Activated T-helper 1 cell treated with anti-CD3 and anti-CD28 coated beads, Interleukin-12 subunit alpha, Interleukin-12 subunit beta, Interleukin-2, Interleukin-4 antibody, amounts not matched to agents 30 ng/mL and 10 ng/mL and 1 ng/mL, durations not matched to agents 14 hours and 24 hours and 36 hours (primary cell): ENCODE measurements at regions of chr1 and their contacts with region 1.

Region 1: DNA sequence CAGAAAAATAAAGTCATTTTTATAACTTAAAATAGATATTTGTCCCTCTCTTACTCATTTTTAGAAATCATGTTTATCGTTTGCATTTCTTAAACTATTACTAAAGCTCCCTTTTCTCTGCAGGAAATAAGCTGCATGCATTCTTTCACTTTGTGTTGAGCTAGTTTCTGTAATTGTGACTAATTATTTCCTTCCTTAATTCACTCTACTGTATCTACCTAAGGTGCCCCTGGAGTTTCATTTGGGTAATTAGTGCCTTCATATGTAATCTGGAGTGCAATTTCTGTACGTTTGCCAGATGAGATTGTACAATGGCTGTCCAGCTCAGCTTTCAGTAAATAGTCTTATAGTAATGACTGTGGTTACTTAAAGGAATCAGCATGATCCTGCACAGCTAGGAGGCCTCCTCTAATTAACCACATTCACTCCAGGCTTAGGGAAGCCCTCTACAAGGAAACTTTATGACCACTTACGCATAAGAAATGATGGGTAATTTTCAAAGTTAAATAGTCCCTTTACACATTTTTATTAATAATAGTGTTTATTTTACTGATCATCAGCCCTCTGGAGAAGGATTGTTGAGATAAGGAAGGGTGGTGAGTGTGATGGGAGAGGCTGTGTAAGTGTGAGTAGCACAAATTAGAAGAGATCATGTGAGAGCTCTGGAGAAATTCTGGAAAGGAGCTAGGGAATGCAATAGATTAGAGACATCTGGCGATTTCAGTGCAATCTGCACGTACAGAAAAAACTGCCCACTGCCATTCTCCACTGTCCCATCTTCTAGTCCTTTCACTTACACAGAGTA is 86.8 kb downstream of the LRRC8C start:
- DNase-seq: no peak
- H3K4me3 Mint-ChIP-seq: peak overlapping the region; percentile 76
- H3K27ac Mint-ChIP-seq: peak overlapping the region; percentile 100
- H3K4me1 Mint-ChIP-seq: peaks cover 88% of the 10 kb centered on the region
- H3K27me3 Mint-ChIP-seq: no peaks in the 10 kb centered on the region

Region 2: DNA sequence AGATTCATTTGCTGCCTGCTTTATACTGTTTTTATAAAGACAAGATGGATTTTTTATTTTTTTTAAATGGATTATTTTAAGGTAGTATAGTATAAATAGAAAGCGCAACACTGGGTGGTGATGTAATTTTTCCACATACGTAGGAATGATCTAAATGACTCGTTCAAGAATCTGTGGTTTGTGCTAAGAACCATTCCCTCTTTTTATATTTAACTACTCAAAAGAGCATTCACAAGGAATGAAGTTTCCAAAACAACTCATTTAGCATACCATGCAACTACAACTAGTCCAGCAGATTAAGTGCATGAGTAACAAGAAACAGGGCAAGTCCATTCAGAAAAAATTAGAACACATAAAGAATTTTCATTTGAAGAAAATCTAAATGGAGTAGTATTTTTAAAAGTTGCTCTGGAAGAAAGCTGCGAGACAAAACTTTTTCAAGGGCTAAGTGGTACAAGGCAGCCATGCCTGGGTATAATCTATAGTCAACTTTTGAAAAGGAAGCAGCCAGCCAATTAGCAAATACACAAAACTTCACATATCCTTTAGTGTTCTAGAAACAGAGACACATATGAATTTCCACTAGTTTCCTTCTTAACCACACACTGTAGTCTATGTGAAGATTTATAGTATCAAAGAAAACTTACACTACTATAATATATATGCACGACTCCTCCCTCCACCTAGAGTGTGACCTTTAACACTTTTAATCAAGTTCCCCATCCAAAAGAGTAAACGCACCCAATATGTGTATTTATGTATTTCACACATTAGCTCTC is 851.8 kb before region 1 on chr1:
- intact Hi-C with region 1: loop called (anchors 5 kb)
- DNase-seq: no peak
- H3K4me3 Mint-ChIP-seq: peak overlapping the region; percentile 60
- H3K27ac Mint-ChIP-seq: peak overlapping the region; percentile 87
- H3K4me1 Mint-ChIP-seq: peaks cover 35% of the 10 kb centered on the region
- H3K27me3 Mint-ChIP-seq: no peaks in the 10 kb centered on the region

Region 3: DNA sequence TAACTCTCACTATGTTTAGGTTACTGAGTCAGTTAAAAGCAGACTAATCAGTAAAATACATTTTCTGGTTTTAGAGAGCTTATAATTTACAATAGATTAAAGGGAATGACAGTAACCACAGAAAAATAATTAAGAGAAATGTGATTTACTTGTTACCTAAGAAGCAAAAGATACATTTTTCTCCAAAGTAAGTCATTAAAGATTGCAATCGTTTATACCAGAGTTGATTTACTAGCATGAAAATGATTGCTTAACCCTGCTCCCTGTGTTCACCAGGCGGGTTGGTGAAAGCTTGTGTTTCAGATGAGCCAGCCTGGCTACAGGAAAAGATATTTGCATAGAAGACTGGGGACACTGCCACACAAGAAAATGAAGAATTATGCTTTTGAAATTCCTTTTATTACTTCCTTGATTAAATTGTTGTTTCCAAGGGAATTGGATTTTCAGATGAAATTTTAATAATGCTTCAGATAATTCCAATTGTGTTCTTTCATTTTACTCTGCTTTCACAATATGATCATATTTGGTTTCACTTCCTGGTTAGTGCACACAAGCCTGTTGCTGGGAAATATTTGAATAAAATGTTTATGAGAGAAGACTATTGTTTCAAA is 167.1 kb before region 1 on chr1:
- intact Hi-C with region 1: loop called (anchors 1 kb)
- DNase-seq: no peak
- H3K4me3 Mint-ChIP-seq: peak overlapping the region; percentile 50
- H3K27ac Mint-ChIP-seq: peak overlapping the region; percentile 75
- H3K4me1 Mint-ChIP-seq: peaks cover 92% of the 10 kb centered on the region
- H3K27me3 Mint-ChIP-seq: no peaks in the 10 kb centered on the region

Region 4: GRCh38 chr1:89657886-89658285 is 61.8 kb before region 1 on chr1:
- intact Hi-C with region 1: loop called (anchors 1 kb)
- DNase-seq: peak; percentile 24
- H3K4me3 Mint-ChIP-seq: peak overlapping the region; percentile 62
- H3K27ac Mint-ChIP-seq: peak overlapping the region; percentile 72
- H3K4me1 Mint-ChIP-seq: peaks cover 91% of the 10 kb centered on the region
- H3K27me3 Mint-ChIP-seq: no peaks in the 10 kb centered on the region

Region 5: GRCh38 chr1:89706700-89707012 is 13.0 kb before region 1 on chr1:
- intact Hi-C with region 1: no loop called
- DNase-seq: no peak
- H3K4me3 Mint-ChIP-seq: no peak overlapping the region
- H3K27ac Mint-ChIP-seq: no peak overlapping the region
- H3K4me1 Mint-ChIP-seq: peaks cover 59% of the 10 kb centered on the region
- H3K27me3 Mint-ChIP-seq: no peaks in the 10 kb centered on the region

Region 6: DNA sequence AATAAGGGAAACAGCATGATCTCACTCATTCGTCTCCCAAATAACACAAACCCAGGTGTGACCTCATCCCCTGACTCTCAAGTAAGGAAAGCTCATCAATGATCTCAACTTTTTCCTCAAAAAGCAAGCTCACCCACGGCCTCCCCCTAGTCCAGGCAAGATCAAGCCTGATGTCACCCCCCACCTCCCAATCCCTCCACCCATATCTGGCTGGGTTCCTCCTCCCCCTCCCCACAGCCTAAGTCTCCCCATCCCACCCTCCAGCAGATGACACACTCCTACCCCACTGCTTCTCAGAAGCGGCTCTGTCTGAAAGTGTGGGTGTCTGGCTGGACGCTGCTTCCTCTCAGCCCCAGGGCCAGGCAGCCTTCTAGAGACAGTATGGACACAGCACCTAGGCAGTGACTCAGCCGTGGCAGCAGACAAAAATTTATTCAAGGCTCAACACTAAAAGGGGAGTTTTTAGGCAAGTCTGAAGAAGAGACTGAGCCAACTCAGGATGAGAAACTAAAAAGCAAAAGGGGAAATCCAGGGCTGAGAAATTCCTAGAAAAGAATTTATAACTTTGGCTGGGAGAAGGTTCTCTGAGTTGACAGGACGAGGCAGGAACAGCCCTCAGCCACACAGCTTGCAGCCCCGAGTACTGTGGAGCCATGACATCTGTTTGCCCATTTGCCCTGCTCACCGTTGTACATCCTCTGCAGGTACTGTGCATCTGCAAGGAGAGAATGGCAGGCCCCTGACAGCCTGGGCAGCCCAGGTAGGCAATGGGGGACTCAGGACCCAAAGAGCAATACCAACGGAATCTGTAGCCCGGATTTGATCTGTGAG is 19.5 kb after region 1 on chr1:
- intact Hi-C with region 1: loop called (anchors 1 kb)
- DNase-seq: no peak
- H3K4me3 Mint-ChIP-seq: peak overlapping the region; percentile 72
- H3K27ac Mint-ChIP-seq: peak overlapping the region; percentile 95
- H3K4me1 Mint-ChIP-seq: peaks cover 76% of the 10 kb centered on the region
- H3K27me3 Mint-ChIP-seq: peaks cover 3% of the 10 kb centered on the region

Region 7: DNA sequence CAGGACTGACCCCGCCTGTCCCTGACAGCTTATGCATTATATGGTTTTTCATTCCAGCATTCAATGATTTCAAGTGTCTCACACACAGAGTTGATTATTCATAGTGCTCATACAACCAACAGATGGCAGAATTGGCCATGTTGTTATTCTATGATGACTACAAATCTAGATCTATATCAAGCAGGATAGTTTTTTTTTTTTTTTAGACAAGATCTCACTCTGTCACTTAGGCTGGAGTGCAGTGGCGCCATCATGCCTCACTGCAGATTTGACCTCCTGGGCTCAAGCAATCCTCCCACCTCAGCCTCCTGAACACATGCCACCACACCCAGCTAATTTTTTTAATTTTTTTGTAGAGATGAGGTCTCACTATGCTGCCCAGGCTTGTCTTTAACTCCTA is 61.0 kb after region 1 on chr1:
- intact Hi-C with region 1: loop called (anchors 1 kb)
- DNase-seq: no peak
- H3K4me3 Mint-ChIP-seq: peak overlapping the region; percentile 59
- H3K27ac Mint-ChIP-seq: peak overlapping the region; percentile 97
- H3K4me1 Mint-ChIP-seq: peaks cover 48% of the 10 kb centered on the region
- H3K27me3 Mint-ChIP-seq: peaks cover 4% of the 10 kb centered on the region